Activated CD4-positive, alpha-beta T cell treated with anti-CD3 and anti-CD28 coated beads for 36 hours (primary cell): ENCODE measurements at regions of chr2 and their contacts with region 1.

Region 1: GRCh38 chr2:96145036-96145847 is at the start of gene DUSP2:
- DNase-seq: peak; percentile 97
- ATAC-seq: peak; percentile 45
- H3K4me3 Mint-ChIP-seq: peak within 1 kb of the TSS; percentile 97
- H3K27ac Mint-ChIP-seq: peak within 1 kb of the TSS; percentile 99
- H3K4me1 Mint-ChIP-seq: peaks cover 57% of the 10 kb centered on the region
- H3K27me3 Mint-ChIP-seq: no peaks in the 10 kb centered on the region
- total RNA-seq, gene DUSP2: 248 to 407 TPM

Region 2: DNA sequence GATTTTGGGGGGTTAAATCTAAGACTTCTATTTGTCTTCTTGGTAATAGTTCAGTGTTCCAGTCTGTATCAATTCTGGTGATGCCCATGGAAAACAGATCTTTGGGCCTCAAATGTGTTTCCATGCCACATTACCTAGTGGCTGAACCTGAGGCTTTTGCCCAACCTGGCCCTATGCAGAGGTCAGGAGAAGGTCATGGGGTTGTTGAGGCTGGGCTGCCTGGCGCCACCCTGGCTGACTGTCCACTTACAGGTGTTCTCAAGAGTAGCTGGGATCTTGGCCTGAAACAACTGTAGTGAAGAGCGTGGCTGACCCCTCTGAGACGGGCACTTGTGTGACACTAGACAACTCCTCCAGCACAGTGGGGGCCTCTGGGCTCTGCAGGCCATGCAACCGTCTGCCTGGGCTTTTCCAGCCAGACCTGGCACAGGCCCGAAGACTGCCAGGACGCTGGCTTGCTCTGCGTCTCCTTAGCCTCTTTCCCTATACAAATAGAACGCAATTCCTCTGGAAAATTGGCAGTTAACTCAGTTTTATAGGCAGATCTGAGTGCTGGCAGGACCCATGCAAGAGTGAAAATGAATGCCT is 425.7 kb before region 1 on chr2:
- CTCF ChIA-PET with region 1: no interaction called
- POLR2A ChIA-PET with region 1: no interaction called
- intact Hi-C with region 1: no loop called
- DNase-seq: no peak
- ATAC-seq: no peak
- H3K4me3 Mint-ChIP-seq: no peak overlapping the region
- H3K27ac Mint-ChIP-seq: no peak overlapping the region
- H3K4me1 Mint-ChIP-seq: no peaks in the 10 kb centered on the region
- H3K27me3 Mint-ChIP-seq: peaks cover 2% of the 10 kb centered on the region

Region 3: DNA sequence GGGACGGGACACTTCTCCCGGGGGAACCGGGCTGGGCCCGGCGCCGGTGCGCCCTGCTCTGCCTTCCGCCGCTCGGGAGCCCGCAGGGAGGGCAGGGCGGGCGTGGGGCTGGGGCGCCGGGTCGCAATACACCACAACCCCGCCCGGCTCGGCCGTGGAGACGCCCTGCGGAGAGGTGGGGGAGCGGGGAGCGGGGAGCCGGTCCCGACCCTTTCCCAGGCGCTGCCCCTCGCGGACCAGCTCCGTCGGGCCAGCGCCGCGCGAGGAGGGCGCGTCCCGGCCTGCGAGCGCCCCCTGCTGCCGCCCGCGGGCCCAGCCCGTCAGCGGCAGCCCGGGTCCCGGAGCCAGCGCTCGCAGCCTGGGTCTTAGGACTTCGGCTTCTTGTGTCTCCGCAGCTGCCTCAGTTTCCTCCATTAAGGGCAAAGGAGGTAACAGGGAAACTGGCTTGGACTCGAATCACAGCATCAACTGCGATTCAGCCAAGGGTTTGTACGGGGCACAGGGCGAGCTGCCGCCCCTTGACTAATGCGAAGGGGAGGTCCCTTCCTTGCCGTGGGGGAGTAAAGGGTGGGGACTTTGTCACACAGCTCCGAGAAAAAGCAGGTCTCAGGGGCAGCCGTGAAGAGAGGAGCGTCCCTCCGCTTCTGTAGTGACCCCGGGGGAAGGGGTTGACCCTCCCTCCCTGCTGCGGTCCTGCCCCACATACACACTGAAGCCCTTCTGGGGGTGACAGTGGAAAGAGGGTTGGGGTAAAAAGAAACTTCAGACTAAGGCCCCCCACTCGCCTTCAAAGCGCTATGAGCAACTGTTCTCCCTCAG is 28.2 kb before region 1 on chr2:
- CTCF ChIA-PET with region 1: interaction called, 6 read pairs
- POLR2A ChIA-PET with region 1: interaction called, 3 read pairs
- intact Hi-C with region 1: loop called in 1 of 2 experiments (anchors 1 kb)
- DNase-seq: peak; percentile 80
- ATAC-seq: peak; percentile 87
- H3K4me3 Mint-ChIP-seq: peak overlapping the region; percentile 55
- H3K27ac Mint-ChIP-seq: no peak overlapping the region
- H3K4me1 Mint-ChIP-seq: peaks cover 10% of the 10 kb centered on the region
- H3K27me3 Mint-ChIP-seq: peaks cover 36% of the 10 kb centered on the region

Region 4: GRCh38 chr2:96164459-96165184 is 19.4 kb after region 1 on chr2:
- CTCF ChIA-PET with region 1: interaction called, 18 read pairs
- POLR2A ChIA-PET with region 1: interaction called, 119 read pairs
- intact Hi-C with region 1: loop called (anchors 1 kb)
- DNase-seq: peak; percentile 88
- ATAC-seq: peak; percentile 85
- H3K4me3 Mint-ChIP-seq: peak overlapping the region; percentile 82
- H3K27ac Mint-ChIP-seq: peak overlapping the region; percentile 100
- H3K4me1 Mint-ChIP-seq: peaks cover 80% of the 10 kb centered on the region
- H3K27me3 Mint-ChIP-seq: no peaks in the 10 kb centered on the region

Region 5: GRCh38 chr2:96305091-96305978 is 160.1 kb after region 1 on chr2 and contains the start of gene SNRNP200:
- CTCF ChIA-PET with region 1: no interaction called
- POLR2A ChIA-PET with region 1: no interaction called
- intact Hi-C with region 1: loop called (anchors 1 to 5 kb)
- DNase-seq: peak; percentile 96
- ATAC-seq: peak; percentile 97
- H3K4me3 Mint-ChIP-seq: peak within 1 kb of the TSS; percentile 100
- H3K27ac Mint-ChIP-seq: peak within 1 kb of the TSS; percentile 99
- H3K4me1 Mint-ChIP-seq: peaks cover 46% of the 10 kb centered on the region
- H3K27me3 Mint-ChIP-seq: no peaks in the 10 kb centered on the region
- total RNA-seq, gene SNRNP200: 176 to 198 TPM

Region 6: DNA sequence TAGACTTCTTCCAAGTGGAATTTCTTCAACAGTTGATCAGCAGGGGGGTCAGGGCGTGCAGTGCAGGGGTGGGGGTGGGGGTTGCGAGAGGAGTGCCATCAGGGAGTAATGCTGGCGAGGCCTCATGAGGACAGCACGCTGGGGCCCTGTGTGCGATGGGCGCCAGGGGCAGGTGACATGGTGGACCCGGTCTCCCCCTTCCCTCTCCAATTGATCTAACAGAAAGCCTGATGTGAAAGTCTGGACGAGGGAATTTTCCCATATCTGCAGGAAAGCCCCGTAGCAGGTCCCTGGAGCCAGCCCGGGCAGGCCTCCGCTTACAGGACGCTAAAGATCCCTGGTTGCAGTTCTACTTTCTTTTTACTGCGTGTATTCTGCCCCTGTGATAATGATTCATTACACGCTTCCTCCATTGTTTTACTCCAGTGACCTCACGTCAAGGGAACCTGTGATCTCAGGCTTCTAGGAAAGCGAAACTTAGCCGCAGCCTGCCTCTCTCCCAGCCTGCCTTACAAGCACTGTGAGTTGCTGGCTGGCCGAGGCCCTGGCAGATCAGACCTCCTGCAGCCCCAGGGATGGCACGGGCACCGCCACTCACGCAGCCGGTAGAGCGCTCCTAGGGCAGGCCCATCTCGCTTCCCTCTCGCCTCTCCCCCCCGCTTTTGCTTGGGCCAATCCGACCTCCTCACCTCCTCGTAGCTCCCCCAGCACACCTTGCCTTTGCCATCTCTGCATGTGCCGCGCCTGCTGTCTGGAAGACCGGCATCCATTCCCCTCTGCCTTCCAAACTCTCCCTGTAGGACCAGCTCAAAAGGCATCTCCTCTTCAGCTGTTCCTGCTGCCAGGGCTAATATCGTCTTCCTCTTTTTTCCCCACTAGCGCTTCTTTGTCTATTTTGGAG is 340.8 kb after region 1 on chr2:
- CTCF ChIA-PET with region 1: no interaction called
- POLR2A ChIA-PET with region 1: no interaction called
- intact Hi-C with region 1: loop called in 1 of 2 experiments (anchors 5 kb)
- DNase-seq: peak; percentile 94
- ATAC-seq: peak; percentile 95
- H3K4me3 Mint-ChIP-seq: peak overlapping the region; percentile 90
- H3K27ac Mint-ChIP-seq: peak overlapping the region; percentile 95
- H3K4me1 Mint-ChIP-seq: peaks cover 48% of the 10 kb centered on the region
- H3K27me3 Mint-ChIP-seq: no peaks in the 10 kb centered on the region

Region 7: DNA sequence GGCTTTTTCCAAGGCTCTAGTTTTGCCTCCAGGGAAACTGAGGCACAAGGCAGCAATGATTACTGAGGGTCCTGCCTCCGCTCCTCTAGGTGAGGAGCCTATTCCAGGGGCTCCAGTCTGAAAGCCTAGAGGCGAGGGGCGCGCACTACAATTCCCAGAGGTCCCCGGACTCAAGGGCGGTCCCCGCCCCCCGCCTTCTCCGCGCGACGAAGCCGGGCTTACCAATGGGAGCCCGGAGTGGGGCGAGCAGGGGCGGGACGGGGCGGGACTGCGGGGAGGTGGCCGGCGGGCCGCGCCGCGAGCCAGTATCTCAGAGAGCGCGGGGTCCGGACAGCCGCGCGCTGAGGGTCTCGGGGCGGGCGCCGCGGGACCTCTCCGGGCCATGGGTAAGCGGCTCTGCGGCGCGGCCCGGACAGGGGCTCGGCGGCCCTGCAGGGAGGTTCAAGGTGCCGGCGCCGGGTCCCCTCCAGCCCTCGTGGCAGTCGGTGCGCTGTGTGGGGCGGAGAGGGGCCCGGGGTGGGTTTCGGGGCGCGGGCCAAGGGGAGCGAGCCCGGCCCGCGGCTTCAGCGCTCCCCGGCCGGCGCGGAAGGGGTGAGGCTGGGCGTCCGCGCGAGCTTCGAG is 391.3 kb after region 1 on chr2 and contains the start of gene ARID5A:
- CTCF ChIA-PET with region 1: no interaction called
- POLR2A ChIA-PET with region 1: interaction called, 3 read pairs
- intact Hi-C with region 1: loop called (anchors 1 to 5 kb)
- DNase-seq: peak; percentile 97
- ATAC-seq: peak; percentile 66
- H3K4me3 Mint-ChIP-seq: peak within 1 kb of the TSS; percentile 97
- H3K27ac Mint-ChIP-seq: peak within 1 kb of the TSS; percentile 90
- H3K4me1 Mint-ChIP-seq: peaks cover 64% of the 10 kb centered on the region
- H3K27me3 Mint-ChIP-seq: no peaks in the 10 kb centered on the region
- total RNA-seq, gene ARID5A: 179 to 191 TPM